Caco-2 (cell line): ENCODE measurements at regions of chr2 and their contacts with region 1.

Region 1: DNA sequence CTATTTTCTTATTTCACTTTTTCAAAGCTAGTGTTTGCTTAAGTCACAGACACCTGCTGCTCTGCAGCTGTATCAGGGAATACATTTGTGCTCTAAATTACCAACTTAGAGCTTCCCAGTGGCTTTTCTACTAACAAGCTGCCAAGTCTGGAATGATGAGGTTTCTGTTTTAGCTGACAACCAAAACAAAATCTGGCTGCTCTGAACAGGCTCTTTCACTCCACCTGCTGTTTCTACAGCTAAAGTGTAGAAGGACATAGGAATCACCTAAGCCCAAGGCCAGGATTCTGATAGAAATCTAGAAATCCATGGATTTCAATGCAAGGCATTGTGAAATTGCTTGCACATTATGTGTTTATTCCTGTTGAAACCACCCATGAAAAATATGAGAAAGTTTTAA is 201.2 kb downstream of the SUCLG1 start:
- DNase-seq: peak in 1 of 2 experiments; percentile 34
- H3K4me3 ChIP-seq: no peak overlapping the region
- H3K4me3 Mint-ChIP-seq: no peak overlapping the region
- H3K27ac Mint-ChIP-seq: no peak overlapping the region
- H3K4me1 ChIP-seq: no peaks in the 10 kb centered on the region
- H3K4me1 Mint-ChIP-seq: no peaks in the 10 kb centered on the region
- H3K27me3 ChIP-seq: no peaks in the 10 kb centered on the region
- H3K27me3 Mint-ChIP-seq: no peaks in the 10 kb centered on the region
- CTCF ChIP-seq: peak in 1 of 2 experiments; percentile 53

Region 2: GRCh38 chr2:84077492-84077891 is 180.3 kb before region 1 on chr2:
- CTCF ChIA-PET with region 1: no interaction called
- POLR2A ChIA-PET with region 1: no interaction called
- intact Hi-C with region 1: loop called (anchors 5 kb)
- DNase-seq: peak in 1 of 2 experiments; percentile 35
- H3K4me3 ChIP-seq: no peak overlapping the region
- H3K4me3 Mint-ChIP-seq: no peak overlapping the region
- H3K27ac Mint-ChIP-seq: no peak overlapping the region
- H3K4me1 ChIP-seq: no peaks in the 10 kb centered on the region
- H3K4me1 Mint-ChIP-seq: no peaks in the 10 kb centered on the region
- H3K27me3 ChIP-seq: no peaks in the 10 kb centered on the region
- H3K27me3 Mint-ChIP-seq: no peaks in the 10 kb centered on the region
- CTCF ChIP-seq: peak; percentile 17 to 39